ENCODE measurements at regions of chr3 and their contacts with region 1.

Region 1: GRCh38 chr3:125585595-125586223 is 9.6 kb downstream of the OSBPL11 start:
- DNase-seq: no peak
- ATAC-seq: peak; percentile 66
- H3K4me3 ChIP-seq: no peak overlapping the region
- H3K27ac ChIP-seq: no peak overlapping the region
- H3K4me1 ChIP-seq: peaks cover 10% of the 10 kb centered on the region; the same call in 1 of the 2 replicates
- H3K27me3 ChIP-seq: no peaks in the 10 kb centered on the region
- CTCF ChIP-seq: peak; percentile 82 to 91 (median 91)
- EP300 ChIP-seq: no peak
- POLR2A ChIP-seq: no peak
- RAD21 ChIP-seq: peak; percentile 93

Region 2: DNA sequence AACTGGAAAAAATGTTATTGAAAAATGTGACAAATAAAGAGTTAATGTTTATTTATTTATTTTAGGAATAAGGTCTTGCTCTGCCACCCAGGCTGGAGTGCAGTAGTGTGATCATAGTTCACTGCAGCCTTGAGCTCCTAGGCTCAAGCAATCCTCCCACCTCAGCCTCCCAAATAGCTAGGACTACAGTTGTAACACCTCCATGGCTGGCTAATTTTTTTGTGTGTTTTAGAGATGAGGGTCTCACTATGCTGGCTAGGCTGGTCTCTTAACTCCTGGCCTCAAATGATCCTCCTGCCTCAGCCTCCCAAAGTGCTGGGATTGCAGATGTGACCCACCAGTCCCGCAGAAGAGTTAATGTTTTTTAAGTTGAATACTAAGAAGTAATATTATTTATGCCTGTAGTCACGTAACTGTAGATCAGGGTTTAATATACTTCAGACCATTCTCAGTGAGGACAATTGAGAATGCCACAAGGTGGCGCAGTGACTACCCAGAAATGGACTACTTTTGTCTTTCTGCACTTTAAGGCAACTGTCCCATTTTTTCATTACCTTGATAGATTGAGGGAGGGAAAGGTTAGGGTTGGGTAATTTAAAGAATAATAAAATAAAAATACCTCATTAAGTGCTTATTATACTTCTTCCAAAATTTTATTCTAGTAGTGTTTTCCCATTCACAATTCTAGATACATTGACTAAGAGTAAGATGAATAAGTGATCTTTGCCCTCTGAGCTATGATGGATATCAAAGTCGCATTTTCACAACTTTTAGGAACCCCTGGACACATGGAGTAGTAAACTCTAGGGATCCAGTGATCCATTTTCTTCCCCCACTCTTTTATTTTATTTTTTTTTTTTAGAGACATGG is 657.1 kb before region 1 on chr3:
- CTCF ChIA-PET with region 1: interaction called, 19 read pairs
- POLR2A ChIA-PET with region 1: interaction called, 3 read pairs
- RAD21 ChIA-PET with region 1: interaction called, 14 read pairs
- SMC1A ChIA-PET with region 1: interaction called, 17 read pairs
- in situ Hi-C with region 1: no loop called
- intact Hi-C with region 1: loop called (anchors 5 kb)
- DNase-seq: no peak
- ATAC-seq: peak; percentile 80
- H3K4me3 ChIP-seq: no peak overlapping the region
- H3K27ac ChIP-seq: no peak overlapping the region
- H3K4me1 ChIP-seq: peaks cover 15% of the 10 kb centered on the region; the same call in 1 of the 2 replicates
- H3K27me3 ChIP-seq: no peaks in the 10 kb centered on the region
- CTCF ChIP-seq: peak; percentile 63 to 75 (median 64); a peak in 5 of 6 replicates
- EP300 ChIP-seq: no peak
- POLR2A ChIP-seq: no peak
- RAD21 ChIP-seq: peak; percentile 74

Region 3: GRCh38 chr3:125398954-125399353 is 186.8 kb before region 1 on chr3:
- CTCF ChIA-PET with region 1: interaction called, 10 read pairs
- POLR2A ChIA-PET with region 1: no interaction called
- RAD21 ChIA-PET with region 1: interaction called, 3 read pairs
- SMC1A ChIA-PET with region 1: interaction called, 3 read pairs
- in situ Hi-C with region 1: no loop called
- intact Hi-C with region 1: no loop called
- DNase-seq: no peak
- ATAC-seq: 0 out of 3 replicates have a peak, but pooled peaks have one; percentile 41
- H3K4me3 ChIP-seq: no peak overlapping the region
- H3K27ac ChIP-seq: no peak overlapping the region
- H3K4me1 ChIP-seq: no peaks in the 10 kb centered on the region
- H3K27me3 ChIP-seq: no peaks in the 10 kb centered on the region
- CTCF ChIP-seq: peak in 2 of 3 experiments; percentile 22 to 34; a peak in 4 of 6 replicates
- EP300 ChIP-seq: no peak
- POLR2A ChIP-seq: no peak
- RAD21 ChIP-seq: peak; percentile 29; the same call in 1 of the 2 replicates

Region 4: GRCh38 chr3:125462722-125463299 is 122.9 kb before region 1 on chr3:
- CTCF ChIA-PET with region 1: interaction called, 19 read pairs
- POLR2A ChIA-PET with region 1: no interaction called
- RAD21 ChIA-PET with region 1: interaction called, 4 read pairs
- SMC1A ChIA-PET with region 1: interaction called, 3 read pairs
- in situ Hi-C with region 1: no loop called
- intact Hi-C with region 1: no loop called
- DNase-seq: no peak
- ATAC-seq: no peak
- H3K4me3 ChIP-seq: no peak overlapping the region
- H3K27ac ChIP-seq: no peak overlapping the region
- H3K4me1 ChIP-seq: no peaks in the 10 kb centered on the region
- H3K27me3 ChIP-seq: no peaks in the 10 kb centered on the region
- CTCF ChIP-seq: no peak
- EP300 ChIP-seq: no peak
- POLR2A ChIP-seq: no peak
- RAD21 ChIP-seq: no peak

Region 5: DNA sequence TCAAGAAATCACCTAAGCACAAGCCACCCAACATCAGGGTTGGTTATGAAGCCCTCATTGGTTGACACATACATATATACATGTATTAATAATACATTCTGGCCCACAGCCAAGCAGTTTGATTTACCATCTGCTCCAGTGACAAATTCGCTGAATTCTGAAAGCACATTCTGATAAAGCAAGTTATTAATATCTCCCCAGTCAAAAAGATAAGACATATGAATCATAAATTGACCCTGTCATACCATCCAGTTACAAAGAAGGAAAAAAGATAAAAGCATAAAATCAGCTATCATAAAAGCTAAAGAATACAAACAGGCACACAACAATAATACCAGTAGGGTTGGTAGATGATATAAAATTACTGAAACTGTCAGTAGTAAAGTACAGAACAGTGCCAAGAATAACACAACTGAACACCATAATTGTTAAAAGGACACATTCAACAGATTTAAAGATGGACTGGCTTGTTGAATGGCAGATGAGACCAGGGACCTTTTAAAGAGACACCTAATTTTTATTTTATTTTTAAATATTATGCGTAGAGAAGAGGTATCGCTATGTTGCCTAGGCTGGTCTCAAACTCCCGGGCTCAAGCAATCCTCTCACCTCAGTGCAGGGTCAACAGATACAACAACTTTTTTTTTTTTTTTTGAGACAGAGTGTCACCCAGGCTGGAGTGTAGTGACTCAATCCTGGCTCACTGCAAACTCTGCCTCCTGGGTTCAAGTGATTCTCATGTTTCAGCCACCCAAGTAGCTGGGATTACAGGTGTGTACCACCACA is 73.4 kb before region 1 on chr3:
- CTCF ChIA-PET with region 1: interaction called, 31 read pairs
- POLR2A ChIA-PET with region 1: no interaction called
- RAD21 ChIA-PET with region 1: interaction called, 10 read pairs
- SMC1A ChIA-PET with region 1: interaction called, 11 read pairs
- in situ Hi-C with region 1: no loop called
- intact Hi-C with region 1: no loop called
- DNase-seq: peak; percentile 26
- ATAC-seq: peak; percentile 74
- H3K4me3 ChIP-seq: 0 out of 2 replicates have a peak overlapping the region, but pooled peaks have one; percentile 31
- H3K27ac ChIP-seq: peak overlapping the region; percentile 84
- H3K4me1 ChIP-seq: peaks cover 15% of the 10 kb centered on the region
- H3K27me3 ChIP-seq: no peaks in the 10 kb centered on the region
- CTCF ChIP-seq: no peak
- EP300 ChIP-seq: peak in 1 of 2 experiments; percentile 65; a peak in 1 of 4 replicates
- POLR2A ChIP-seq: no peak
- RAD21 ChIP-seq: no peak

Region 6: GRCh38 chr3:125573216-125573615 is 12.5 kb before region 1 on chr3:
- CTCF ChIA-PET with region 1: interaction called, 14 read pairs
- POLR2A ChIA-PET with region 1: interaction called, 7 read pairs
- RAD21 ChIA-PET with region 1: no interaction called
- SMC1A ChIA-PET with region 1: interaction called, 17 read pairs
- in situ Hi-C with region 1: no loop called
- intact Hi-C with region 1: no loop called
- DNase-seq: no peak
- ATAC-seq: no peak
- H3K4me3 ChIP-seq: no peak overlapping the region
- H3K27ac ChIP-seq: no peak overlapping the region
- H3K4me1 ChIP-seq: no peaks in the 10 kb centered on the region
- H3K27me3 ChIP-seq: no peaks in the 10 kb centered on the region
- CTCF ChIP-seq: no peak
- EP300 ChIP-seq: no peak
- POLR2A ChIP-seq: no peak
- RAD21 ChIP-seq: no peak

Region 7: DNA sequence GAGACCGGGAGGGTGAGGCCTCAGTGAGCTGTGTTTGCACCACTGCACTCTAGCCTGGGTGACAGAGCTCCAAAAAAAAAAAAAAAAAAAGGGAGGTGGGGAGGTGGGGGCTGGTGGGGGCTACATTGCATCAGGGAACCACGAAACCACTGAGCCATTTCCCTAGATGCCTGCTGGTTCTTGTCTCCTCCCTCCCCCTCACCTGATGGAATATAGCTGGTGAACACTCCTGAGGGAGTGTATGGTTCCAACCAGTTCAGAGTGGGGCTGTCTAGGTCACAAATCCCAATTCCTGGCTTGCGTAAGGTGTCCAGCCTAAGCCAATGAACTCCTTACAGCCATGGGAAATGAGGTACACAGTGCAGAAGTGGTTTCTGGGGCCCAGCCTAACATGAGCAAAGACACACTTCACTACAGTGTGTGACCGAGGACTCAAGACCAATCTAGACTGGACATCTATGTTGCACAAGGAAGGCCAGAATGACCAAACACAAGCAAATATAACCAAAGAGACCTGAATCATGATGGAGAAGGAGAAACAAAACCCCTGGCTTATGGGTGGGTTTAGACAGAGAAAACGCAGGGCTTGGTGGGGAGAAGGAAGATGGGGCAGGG is 48.7 kb after region 1 on chr3:
- CTCF ChIA-PET with region 1: no interaction called
- POLR2A ChIA-PET with region 1: no interaction called
- RAD21 ChIA-PET with region 1: no interaction called
- SMC1A ChIA-PET with region 1: no interaction called
- in situ Hi-C with region 1: no loop called
- intact Hi-C with region 1: no loop called
- DNase-seq: no peak
- ATAC-seq: no peak
- H3K4me3 ChIP-seq: no peak overlapping the region
- H3K27ac ChIP-seq: no peak overlapping the region
- H3K4me1 ChIP-seq: no peaks in the 10 kb centered on the region
- H3K27me3 ChIP-seq: no peaks in the 10 kb centered on the region
- CTCF ChIP-seq: no peak
- EP300 ChIP-seq: no peak
- POLR2A ChIP-seq: no peak
- RAD21 ChIP-seq: no peak

Measured in GM12878 (cell line).